ENCODE measurements at regions of chr5 and their contacts with region 1.

Region 1: GRCh38 chr5:157948738-157949410 is 89.9 kb upstream of the CLINT1 start:
- DNase-seq: peak; percentile 97
- H3K4me3 ChIP-seq: no peak overlapping the region
- H3K27ac ChIP-seq: no peak overlapping the region
- H3K4me1 ChIP-seq: no peaks in the 10 kb centered on the region
- H3K27me3 ChIP-seq: no peaks in the 10 kb centered on the region
- CTCF ChIP-seq: peak; percentile 87

Region 2: DNA sequence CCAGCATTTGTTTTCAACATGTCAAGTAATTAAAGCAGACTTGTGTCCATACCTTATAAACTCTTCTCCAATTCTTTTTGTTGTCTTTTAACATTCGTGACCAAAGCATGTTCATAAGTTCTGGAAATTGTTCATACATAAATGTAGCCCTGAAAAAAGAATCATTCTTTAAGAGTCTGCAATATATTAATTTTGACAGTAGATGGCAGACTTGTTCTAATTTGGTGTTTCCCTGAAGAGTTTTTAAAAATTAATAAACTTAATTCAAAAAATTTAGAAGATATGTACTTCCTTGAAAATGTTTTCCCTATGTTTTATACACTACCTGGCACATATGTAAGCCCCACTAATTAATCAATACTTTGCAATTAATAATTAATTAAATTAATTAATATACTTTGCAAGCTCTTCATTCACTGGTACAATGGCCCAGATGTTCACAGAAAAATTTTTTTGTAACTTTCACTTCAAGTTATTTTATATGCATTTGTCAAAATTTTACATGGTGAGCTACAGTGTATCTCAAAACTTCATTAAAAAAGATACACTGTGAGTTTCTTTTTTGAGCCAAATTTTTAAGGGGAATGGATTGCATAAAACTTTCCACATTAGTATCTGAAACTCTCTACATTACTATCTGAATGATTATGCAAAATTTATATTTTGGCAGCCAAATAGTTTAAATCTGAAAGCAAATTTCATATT is 132.0 kb before region 1 on chr5:
- intact Hi-C with region 1: loop called (anchors 5 kb)
- DNase-seq: no peak
- H3K4me3 ChIP-seq: no peak overlapping the region
- H3K27ac ChIP-seq: no peak overlapping the region
- H3K4me1 ChIP-seq: no peaks in the 10 kb centered on the region
- H3K27me3 ChIP-seq: no peaks in the 10 kb centered on the region
- CTCF ChIP-seq: peak; percentile 47

Region 3: DNA sequence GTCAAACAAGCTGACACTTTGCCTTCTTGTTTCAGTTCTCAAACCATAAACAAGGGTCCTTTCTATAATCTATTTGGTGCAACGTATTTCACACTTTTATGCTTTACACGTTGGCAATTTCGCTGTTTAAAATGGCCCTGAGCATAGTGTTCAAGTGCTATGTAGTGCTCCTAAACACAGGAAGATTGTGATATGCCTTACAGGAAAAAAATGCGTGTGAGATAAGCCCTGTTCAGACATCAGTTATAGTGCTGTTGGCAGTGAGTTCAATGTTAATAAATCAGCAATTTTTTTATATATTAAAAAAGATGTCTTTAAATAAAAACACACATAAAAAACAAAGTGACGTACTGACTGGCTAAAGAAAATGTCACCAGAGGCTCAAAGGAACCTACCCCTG is 113.8 kb before region 1 on chr5:
- intact Hi-C with region 1: no loop called
- DNase-seq: no peak
- H3K4me3 ChIP-seq: no peak overlapping the region
- H3K27ac ChIP-seq: no peak overlapping the region
- H3K4me1 ChIP-seq: no peaks in the 10 kb centered on the region
- H3K27me3 ChIP-seq: no peaks in the 10 kb centered on the region
- CTCF ChIP-seq: no peak

Measured in colonic mucosa (tissue), 4 donors.